PC-9 (cell line): ENCODE measurements at regions of chr12 and their contacts with region 1.

Region 1: GRCh38 chr12:121678716-121679580 is 9.5 kb upstream of the MORN3 start:
- DNase-seq: no peak
- H3K4me3 ChIP-seq: no peak overlapping the region
- H3K27ac ChIP-seq: no peak overlapping the region
- H3K4me1 ChIP-seq: no peaks in the 10 kb centered on the region
- H3K27me3 ChIP-seq: no peaks in the 10 kb centered on the region
- CTCF ChIP-seq: no peak

Region 2: GRCh38 chr12:121413917-121414316 is 265.0 kb before region 1 on chr12:
- CTCF ChIA-PET with region 1: no interaction called
- POLR2A ChIA-PET with region 1: no interaction called
- intact Hi-C with region 1: no loop called
- DNase-seq: no peak
- H3K4me3 ChIP-seq: no peak overlapping the region
- H3K27ac ChIP-seq: no peak overlapping the region
- H3K4me1 ChIP-seq: no peaks in the 10 kb centered on the region
- H3K27me3 ChIP-seq: no peaks in the 10 kb centered on the region
- CTCF ChIP-seq: no peak

Region 3: GRCh38 chr12:121499929-121500793 is 178.8 kb before region 1 on chr12:
- CTCF ChIA-PET with region 1: interaction called, 5 read pairs
- POLR2A ChIA-PET with region 1: no interaction called
- intact Hi-C with region 1: loop called (anchors 2 kb)
- DNase-seq: peak; percentile 39 to 68
- H3K4me3 ChIP-seq: no peak overlapping the region
- H3K27ac ChIP-seq: no peak overlapping the region
- H3K4me1 ChIP-seq: no peaks in the 10 kb centered on the region
- H3K27me3 ChIP-seq: no peaks in the 10 kb centered on the region
- CTCF ChIP-seq: peak; percentile 91

Region 4: GRCh38 chr12:121668750-121669520 is 10.0 kb before region 1 on chr12:
- CTCF ChIA-PET with region 1: interaction called, 12 read pairs
- POLR2A ChIA-PET with region 1: interaction called, 6 read pairs
- intact Hi-C with region 1: no loop called
- DNase-seq: peak in 1 of 2 experiments; percentile 18
- H3K4me3 ChIP-seq: no peak overlapping the region
- H3K27ac ChIP-seq: no peak overlapping the region
- H3K4me1 ChIP-seq: peaks cover 42% of the 10 kb centered on the region
- H3K27me3 ChIP-seq: no peaks in the 10 kb centered on the region
- CTCF ChIP-seq: peak; percentile 62; the same call in 1 of the 2 replicates

Region 5: GRCh38 chr12:121738340-121738858 is 59.5 kb after region 1 on chr12:
- CTCF ChIA-PET with region 1: no interaction called
- POLR2A ChIA-PET with region 1: no interaction called
- intact Hi-C with region 1: no loop called
- DNase-seq: no peak
- H3K4me3 ChIP-seq: no peak overlapping the region
- H3K27ac ChIP-seq: no peak overlapping the region
- H3K4me1 ChIP-seq: no peaks in the 10 kb centered on the region
- H3K27me3 ChIP-seq: no peaks in the 10 kb centered on the region
- CTCF ChIP-seq: no peak